ENCODE measurements at regions of chr16 and their contacts with region 1.

Region 1: GRCh38 chr16:24810951-24811843 is 34.6 kb upstream of the SLC5A11 start:
- DNase-seq: no peak
- ATAC-seq: no peak
- H3K4me3 ChIP-seq: no peak overlapping the region
- H3K27ac ChIP-seq: no peak overlapping the region
- H3K4me1 ChIP-seq: no peaks in the 10 kb centered on the region
- H3K27me3 ChIP-seq: no peaks in the 10 kb centered on the region
- CTCF ChIP-seq: no peak

Region 2: GRCh38 chr16:24568392-24568791 is 242.8 kb before region 1 on chr16:
- intact Hi-C with region 1: loop called (anchors 10 kb)
- DNase-seq: no peak
- ATAC-seq: no peak
- H3K4me3 ChIP-seq: no peak overlapping the region
- H3K27ac ChIP-seq: no peak overlapping the region
- H3K4me1 ChIP-seq: no peaks in the 10 kb centered on the region
- H3K27me3 ChIP-seq: no peaks in the 10 kb centered on the region
- CTCF ChIP-seq: peak; percentile 24

Region 3: DNA sequence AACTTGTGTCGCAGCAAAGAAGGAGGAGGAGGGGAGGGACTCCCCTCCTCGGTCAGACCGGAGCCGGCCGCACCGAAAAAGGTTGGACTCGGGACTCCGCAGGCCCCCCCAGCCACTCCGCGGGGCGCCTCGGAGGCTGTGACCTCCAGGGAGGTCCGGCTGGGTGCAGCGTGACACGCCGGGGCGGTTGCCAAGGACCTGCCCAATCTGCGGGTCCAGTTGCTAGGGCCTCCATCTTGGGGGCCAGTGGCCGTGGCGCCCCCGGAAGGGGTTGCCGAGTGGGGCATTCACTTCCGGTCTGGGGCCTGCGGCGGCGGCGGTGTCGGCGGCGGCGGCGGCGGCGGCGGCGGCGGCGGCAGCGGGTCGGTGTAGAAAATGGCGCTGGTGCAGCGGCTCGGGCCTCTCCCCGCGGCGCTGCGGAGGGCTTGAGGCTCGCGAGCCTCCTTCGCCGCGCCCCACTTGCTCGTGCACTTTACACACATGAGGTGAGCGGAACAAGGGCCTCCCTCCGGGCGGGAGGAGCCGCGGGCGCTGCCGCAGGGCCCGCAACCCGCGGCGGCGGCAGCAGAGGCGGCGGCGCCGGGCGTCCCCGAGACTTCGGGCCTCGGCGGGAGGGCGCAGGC is 81.7 kb before region 1 on chr16 and contains the start of gene TNRC6A:
- intact Hi-C with region 1: no loop called
- DNase-seq: peak; percentile 96
- ATAC-seq: peak; percentile 98
- H3K4me3 ChIP-seq: peak within 1 kb of the TSS; percentile 87
- H3K27ac ChIP-seq: peak within 1 kb of the TSS; percentile 97
- H3K4me1 ChIP-seq: peaks cover 35% of the 10 kb centered on the region
- H3K27me3 ChIP-seq: no peaks in the 10 kb centered on the region
- CTCF ChIP-seq: no peak
- total RNA-seq, gene TNRC6A: 46.5 TPM

Region 4: GRCh38 chr16:24876231-24876630 is 65.0 kb after region 1 on chr16:
- intact Hi-C with region 1: no loop called
- DNase-seq: no peak
- ATAC-seq: no peak
- H3K4me3 ChIP-seq: no peak overlapping the region
- H3K27ac ChIP-seq: no peak overlapping the region
- H3K4me1 ChIP-seq: no peaks in the 10 kb centered on the region
- H3K27me3 ChIP-seq: no peaks in the 10 kb centered on the region
- CTCF ChIP-seq: no peak